ENCODE measurements at regions of chr11 and their contacts with region 1.

Region 1: DNA sequence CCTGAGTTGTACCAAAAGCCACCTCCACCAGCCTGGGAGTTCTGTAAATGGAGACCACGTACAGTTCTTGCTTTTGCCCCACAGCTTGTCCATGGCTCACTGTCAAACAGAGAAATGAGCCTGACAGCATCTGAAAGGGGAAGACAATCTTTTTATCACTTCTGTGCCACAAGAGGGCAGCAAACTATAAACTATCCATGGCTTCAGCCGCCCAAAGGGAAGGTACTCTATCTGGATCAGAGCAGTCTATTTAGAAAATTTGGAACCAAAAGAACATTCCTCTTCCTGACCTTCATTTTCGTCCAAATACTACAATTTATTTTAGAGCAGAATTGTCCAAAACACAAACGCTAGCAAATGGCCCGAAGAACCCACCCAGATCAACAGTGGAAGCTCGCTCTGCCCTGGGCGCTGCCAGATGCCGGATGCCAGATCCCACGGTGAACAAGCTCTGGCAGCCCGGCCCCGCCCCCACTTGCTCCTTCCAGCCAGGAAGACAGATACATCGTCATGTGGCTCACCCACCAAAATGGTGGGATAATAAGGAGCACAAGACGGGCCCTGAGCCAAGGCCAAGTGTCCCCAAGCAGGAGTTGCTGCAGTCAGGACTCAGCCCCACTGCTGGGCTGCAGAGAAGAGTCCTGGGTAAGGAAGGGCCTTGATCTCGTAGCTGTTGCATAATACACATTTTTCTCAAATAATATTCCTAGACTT is 23.9 kb upstream of the SCGB1A1 start:
- DNase-seq: peak; percentile 87
- ATAC-seq: peak; percentile 74

Region 2: GRCh38 chr11:62280452-62280851 is 114.5 kb before region 1 on chr11:
- intact Hi-C with region 1: no loop called
- DNase-seq: no peak
- ATAC-seq: no peak

Region 3: GRCh38 chr11:62694455-62695167 is 299.6 kb after region 1 on chr11:
- intact Hi-C with region 1: loop called (anchors 5 kb)
- DNase-seq: peak; percentile 86
- ATAC-seq: peak; percentile 78

Region 4: GRCh38 chr11:62860835-62861563 is 466.0 kb after region 1 on chr11:
- intact Hi-C with region 1: loop called (anchors 10 kb)
- DNase-seq: no peak
- ATAC-seq: no peak